MCF 10A (cell line): ENCODE measurements at regions of chr1 and their contacts with region 1.

Region 1: GRCh38 chr1:109984456-109985275 is at the start of gene AHCYL1:
- DNase-seq: peak; percentile 99
- H3K4me3 Mint-ChIP-seq: peak within 1 kb of the TSS; percentile 92
- H3K27ac Mint-ChIP-seq: peak within 1 kb of the TSS; percentile 99
- H3K4me1 Mint-ChIP-seq: peaks cover 58% of the 10 kb centered on the region
- H3K27me3 Mint-ChIP-seq: no peaks in the 10 kb centered on the region
- CTCF ChIP-seq: peak; percentile 89
- total RNA-seq, gene AHCYL1: 104 and 106 TPM in 2 replicates

Region 2: DNA sequence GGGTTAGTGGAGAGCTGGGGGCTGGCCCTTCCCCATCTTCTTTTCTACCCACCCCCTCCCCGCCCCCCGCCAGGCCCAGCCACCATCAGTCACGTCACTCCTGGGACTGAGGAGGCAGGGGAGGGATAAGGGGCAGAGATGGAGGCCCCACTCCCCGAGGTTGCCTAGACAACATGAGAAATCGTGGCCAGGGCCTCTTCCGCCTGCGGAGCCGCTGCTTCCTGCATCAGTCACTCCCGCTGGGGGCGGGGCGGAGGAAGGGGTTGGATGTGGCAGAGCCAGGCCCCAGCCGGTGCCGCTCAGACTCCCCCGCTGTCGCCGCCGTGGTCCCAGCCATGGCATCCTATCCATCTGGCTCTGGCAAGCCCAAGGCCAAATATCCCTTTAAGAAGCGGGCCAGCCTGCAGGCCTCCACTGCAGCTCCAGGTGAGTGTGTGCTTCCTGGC is 363.8 kb before region 1 on chr1:
- CTCF ChIA-PET with region 1: interaction called, 3 read pairs
- POLR2A ChIA-PET with region 1: interaction called, 13 read pairs
- intact Hi-C with region 1: no loop called
- DNase-seq: peak; percentile 85
- H3K4me3 Mint-ChIP-seq: peak overlapping the region; percentile 97
- H3K27ac Mint-ChIP-seq: peak overlapping the region; percentile 92
- H3K4me1 Mint-ChIP-seq: peaks cover 40% of the 10 kb centered on the region
- H3K27me3 Mint-ChIP-seq: no peaks in the 10 kb centered on the region
- CTCF ChIP-seq: no peak

Region 3: DNA sequence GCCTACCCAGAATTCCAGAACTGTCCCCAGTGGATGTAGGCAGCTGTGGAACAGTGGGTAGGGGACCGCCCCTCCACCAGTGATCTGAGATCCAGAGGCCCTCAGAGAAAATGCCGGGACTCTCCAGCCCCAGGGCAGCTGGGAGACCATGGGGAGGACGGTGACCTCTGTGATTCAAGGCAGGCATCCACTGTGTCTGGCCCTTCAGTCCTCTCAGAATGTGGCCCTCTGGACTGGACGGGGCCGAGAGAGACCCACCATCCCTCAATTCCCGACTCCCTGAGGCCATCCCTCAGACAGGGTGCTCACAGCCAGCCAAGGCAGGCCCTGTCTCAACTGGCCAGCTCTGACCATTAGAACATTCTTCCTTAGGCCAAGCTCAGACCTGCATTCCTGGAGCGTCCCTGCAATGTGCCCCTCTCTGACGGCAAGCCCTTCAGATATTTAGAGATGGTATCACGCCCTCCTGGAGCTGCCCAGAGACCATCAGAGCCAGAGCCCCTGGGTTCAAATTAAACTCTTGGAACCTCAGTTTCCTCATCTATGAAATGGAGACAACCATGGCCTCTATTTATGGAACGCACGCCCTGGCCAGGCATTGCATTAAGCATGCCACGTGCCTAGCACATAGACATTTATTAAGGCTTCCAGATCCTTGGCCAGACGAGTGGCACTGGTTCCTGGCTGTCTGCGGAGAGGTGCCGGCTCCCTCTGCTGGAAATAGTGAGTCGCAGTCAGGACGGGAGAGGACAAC is 211.3 kb before region 1 on chr1:
- CTCF ChIA-PET with region 1: interaction called, 969 read pairs
- POLR2A ChIA-PET with region 1: interaction called, 82 read pairs
- intact Hi-C with region 1: loop called (anchors 1 kb)
- DNase-seq: peak; percentile 90
- H3K4me3 Mint-ChIP-seq: no peak overlapping the region
- H3K27ac Mint-ChIP-seq: no peak overlapping the region
- H3K4me1 Mint-ChIP-seq: peaks cover 9% of the 10 kb centered on the region
- H3K27me3 Mint-ChIP-seq: no peaks in the 10 kb centered on the region
- CTCF ChIP-seq: peak; percentile 85

Region 4: GRCh38 chr1:109877320-109877771 is 107.3 kb before region 1 on chr1:
- CTCF ChIA-PET with region 1: interaction called, 9 read pairs
- POLR2A ChIA-PET with region 1: interaction called, 9 read pairs
- intact Hi-C with region 1: loop called (anchors 10 kb)
- DNase-seq: peak; percentile 87
- H3K4me3 Mint-ChIP-seq: peak overlapping the region; percentile 29
- H3K27ac Mint-ChIP-seq: peak overlapping the region; percentile 96
- H3K4me1 Mint-ChIP-seq: peaks cover 37% of the 10 kb centered on the region
- H3K27me3 Mint-ChIP-seq: no peaks in the 10 kb centered on the region
- CTCF ChIP-seq: peak; percentile 21

Region 5: GRCh38 chr1:109942434-109942833 is 42.2 kb before region 1 on chr1:
- CTCF ChIA-PET with region 1: no interaction called
- POLR2A ChIA-PET with region 1: no interaction called
- intact Hi-C with region 1: no loop called
- DNase-seq: no peak
- H3K4me3 Mint-ChIP-seq: no peak overlapping the region
- H3K27ac Mint-ChIP-seq: no peak overlapping the region
- H3K4me1 Mint-ChIP-seq: peaks cover 6% of the 10 kb centered on the region
- H3K27me3 Mint-ChIP-seq: no peaks in the 10 kb centered on the region
- CTCF ChIP-seq: no peak

Region 6: GRCh38 chr1:110003747-110004630 is 19.3 kb after region 1 on chr1:
- CTCF ChIA-PET with region 1: interaction called, 93 read pairs
- POLR2A ChIA-PET with region 1: interaction called, 70 read pairs
- intact Hi-C with region 1: no loop called
- DNase-seq: peak; percentile 99
- H3K4me3 Mint-ChIP-seq: peak overlapping the region; percentile 70
- H3K27ac Mint-ChIP-seq: peak overlapping the region; percentile 88
- H3K4me1 Mint-ChIP-seq: peaks cover 53% of the 10 kb centered on the region
- H3K27me3 Mint-ChIP-seq: no peaks in the 10 kb centered on the region
- CTCF ChIP-seq: no peak

Region 7: GRCh38 chr1:110218739-110219138 is 234.1 kb after region 1 on chr1:
- CTCF ChIA-PET with region 1: no interaction called
- POLR2A ChIA-PET with region 1: no interaction called
- intact Hi-C with region 1: no loop called
- DNase-seq: no peak
- H3K4me3 Mint-ChIP-seq: no peak overlapping the region
- H3K27ac Mint-ChIP-seq: no peak overlapping the region
- H3K4me1 Mint-ChIP-seq: no peaks in the 10 kb centered on the region
- H3K27me3 Mint-ChIP-seq: no peaks in the 10 kb centered on the region
- CTCF ChIP-seq: no peak